ENCODE measurements at regions of chr19 and their contacts with region 1.

Region 1: GRCh38 chr19:30792561-30793505 is 420.6 kb downstream of the ZNF536 start:
- DNase-seq: no peak
- ATAC-seq: no peak
- H3K4me3 ChIP-seq: no peak overlapping the region
- H3K4me3 Mint-ChIP-seq: no peak overlapping the region
- H3K27ac ChIP-seq: no peak overlapping the region
- H3K27ac Mint-ChIP-seq: no peak overlapping the region
- H3K4me1 ChIP-seq: no peaks in the 10 kb centered on the region
- H3K4me1 Mint-ChIP-seq: no peaks in the 10 kb centered on the region
- H3K27me3 ChIP-seq: no peaks in the 10 kb centered on the region
- H3K27me3 Mint-ChIP-seq: peaks cover 10% of the 10 kb centered on the region
- CTCF ChIP-seq: no peak

Region 2: DNA sequence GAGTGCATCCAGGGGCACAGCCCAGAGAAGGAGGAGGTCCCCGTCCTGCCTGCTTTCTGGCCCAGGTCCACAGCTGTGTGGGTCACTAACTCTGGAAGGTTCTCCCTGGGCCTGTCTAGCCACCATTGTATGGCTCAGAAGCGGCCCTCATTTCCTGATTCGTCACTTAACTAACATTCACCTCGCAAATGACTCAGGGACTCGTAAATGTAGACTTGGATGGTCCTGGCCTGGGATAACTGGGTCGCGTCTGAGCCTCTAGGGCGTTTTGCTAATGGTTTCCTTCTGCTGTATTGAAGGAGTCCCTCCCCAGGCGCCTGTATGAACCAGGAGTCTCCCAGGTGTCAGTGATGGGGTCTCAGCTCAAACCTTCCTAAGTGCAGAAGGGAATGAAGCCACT is 257.8 kb before region 1 on chr19:
- CTCF ChIA-PET with region 1: no interaction called
- POLR2A ChIA-PET with region 1: no interaction called
- intact Hi-C with region 1: no loop called
- DNase-seq: no peak
- ATAC-seq: no peak
- H3K4me3 ChIP-seq: no peak overlapping the region
- H3K4me3 Mint-ChIP-seq: no peak overlapping the region
- H3K27ac ChIP-seq: no peak overlapping the region
- H3K27ac Mint-ChIP-seq: no peak overlapping the region
- H3K4me1 ChIP-seq: no peaks in the 10 kb centered on the region
- H3K4me1 Mint-ChIP-seq: no peaks in the 10 kb centered on the region
- H3K27me3 ChIP-seq: no peaks in the 10 kb centered on the region
- H3K27me3 Mint-ChIP-seq: no peaks in the 10 kb centered on the region
- CTCF ChIP-seq: no peak

Region 3: DNA sequence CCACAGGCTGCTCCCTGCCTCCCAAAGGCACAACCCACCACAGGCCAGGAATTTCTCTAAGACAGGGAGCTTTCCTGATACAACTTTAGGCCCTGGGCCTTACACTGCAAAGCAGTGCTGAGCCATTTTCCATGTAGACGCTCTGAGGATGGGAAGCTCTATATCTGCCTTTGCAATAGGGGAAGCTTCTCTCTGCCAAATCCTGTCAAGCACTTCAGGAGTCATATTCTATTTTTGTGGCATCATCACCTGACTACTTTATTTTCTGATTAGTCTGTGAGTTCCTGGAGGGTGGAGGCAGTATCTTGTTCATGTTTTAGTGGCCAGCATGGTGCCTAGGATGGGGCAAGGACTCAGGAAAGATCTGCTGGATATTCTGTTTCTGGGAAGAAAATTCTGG is 38.7 kb before region 1 on chr19:
- CTCF ChIA-PET with region 1: no interaction called
- POLR2A ChIA-PET with region 1: no interaction called
- intact Hi-C with region 1: loop called in 1 of 2 experiments (anchors 1 kb)
- DNase-seq: no peak
- ATAC-seq: no peak
- H3K4me3 ChIP-seq: no peak overlapping the region
- H3K4me3 Mint-ChIP-seq: no peak overlapping the region
- H3K27ac ChIP-seq: no peak overlapping the region
- H3K27ac Mint-ChIP-seq: no peak overlapping the region
- H3K4me1 ChIP-seq: no peaks in the 10 kb centered on the region
- H3K4me1 Mint-ChIP-seq: no peaks in the 10 kb centered on the region
- H3K27me3 ChIP-seq: no peaks in the 10 kb centered on the region
- H3K27me3 Mint-ChIP-seq: peaks cover 2% of the 10 kb centered on the region
- CTCF ChIP-seq: no peak

Measured in CD8-positive, alpha-beta T cell (primary cell).